ENCODE measurements at regions of chr3 and their contacts with region 1.

Region 1: DNA sequence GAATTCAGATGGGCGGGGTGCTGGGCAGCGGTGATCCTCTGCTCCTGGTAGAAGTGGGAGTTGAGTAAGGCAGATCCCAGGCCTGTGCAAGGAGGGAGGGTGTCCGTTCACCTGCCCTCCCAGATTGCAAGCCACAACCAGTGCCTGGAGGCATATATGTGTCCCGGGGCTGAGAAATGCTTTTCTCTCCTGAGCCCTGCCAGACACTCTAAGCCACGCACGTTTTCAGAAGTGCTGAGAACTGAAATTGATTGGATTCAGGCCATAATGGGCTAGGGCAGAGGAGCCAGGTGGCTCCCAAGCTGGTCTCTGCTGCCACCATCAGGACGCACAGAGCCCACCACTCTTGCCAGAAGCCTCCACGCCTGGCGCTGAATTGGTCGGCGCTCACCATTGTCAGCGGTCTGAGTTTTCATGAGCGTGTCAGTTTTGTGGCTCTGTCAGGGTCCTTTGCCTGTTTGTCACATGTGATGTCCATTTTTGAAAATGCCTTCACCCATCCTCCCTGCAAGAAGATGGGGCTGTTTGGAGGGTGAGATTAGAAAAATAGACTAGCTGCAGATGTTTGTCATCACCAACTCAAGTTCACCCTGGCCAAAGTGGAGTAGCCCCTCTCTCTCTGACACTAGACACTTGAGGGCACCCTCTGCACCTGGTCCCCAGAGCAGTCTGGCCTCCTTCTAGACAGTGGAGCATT is 15.4 kb upstream of the BFSP2 start:
- DNase-seq: peak; percentile 69
- ATAC-seq: peak; percentile 84
- H3K4me3 ChIP-seq: no peak overlapping the region
- H3K27ac ChIP-seq: no peak overlapping the region
- H3K4me1 ChIP-seq: peaks cover 11% of the 10 kb centered on the region; the same call in 1 of the 2 replicates
- H3K27me3 ChIP-seq: peaks cover 23% of the 10 kb centered on the region
- CTCF ChIP-seq: peak; percentile 87

Region 2: GRCh38 chr3:133040696-133041523 is 343.6 kb before region 1 on chr3:
- CTCF ChIA-PET with region 1: interaction called, 4 read pairs
- POLR2A ChIA-PET with region 1: no interaction called
- intact Hi-C with region 1: loop called (anchors 1 kb)
- DNase-seq: peak; percentile 77
- ATAC-seq: peak; percentile 88
- H3K4me3 ChIP-seq: no peak overlapping the region
- H3K27ac ChIP-seq: no peak overlapping the region
- H3K4me1 ChIP-seq: no peaks in the 10 kb centered on the region
- H3K27me3 ChIP-seq: peaks cover 42% of the 10 kb centered on the region
- CTCF ChIP-seq: peak; percentile 77

Region 3: GRCh38 chr3:133077688-133078087 is 306.8 kb before region 1 on chr3:
- CTCF ChIA-PET with region 1: no interaction called
- POLR2A ChIA-PET with region 1: no interaction called
- intact Hi-C with region 1: no loop called
- DNase-seq: no peak
- ATAC-seq: no peak
- H3K4me3 ChIP-seq: no peak overlapping the region
- H3K27ac ChIP-seq: no peak overlapping the region
- H3K4me1 ChIP-seq: no peaks in the 10 kb centered on the region
- H3K27me3 ChIP-seq: no peaks in the 10 kb centered on the region
- CTCF ChIP-seq: no peak

Region 4: GRCh38 chr3:133113526-133113925 is 271.0 kb before region 1 on chr3:
- CTCF ChIA-PET with region 1: no interaction called
- POLR2A ChIA-PET with region 1: no interaction called
- intact Hi-C with region 1: no loop called
- DNase-seq: peak; percentile 37
- ATAC-seq: no peak
- H3K4me3 ChIP-seq: no peak overlapping the region
- H3K27ac ChIP-seq: no peak overlapping the region
- H3K4me1 ChIP-seq: no peaks in the 10 kb centered on the region
- H3K27me3 ChIP-seq: no peaks in the 10 kb centered on the region; the same call in 1 of the 2 replicates
- CTCF ChIP-seq: no peak

Region 5: GRCh38 chr3:133426721-133427120 is 42.2 kb after region 1 on chr3:
- CTCF ChIA-PET with region 1: no interaction called
- POLR2A ChIA-PET with region 1: no interaction called
- intact Hi-C with region 1: loop called (anchors 1 kb)
- DNase-seq: no peak
- ATAC-seq: no peak
- H3K4me3 ChIP-seq: no peak overlapping the region
- H3K27ac ChIP-seq: no peak overlapping the region
- H3K4me1 ChIP-seq: no peaks in the 10 kb centered on the region
- H3K27me3 ChIP-seq: no peaks in the 10 kb centered on the region
- CTCF ChIP-seq: no peak